ENCODE measurements at regions of chr3 and their contacts with region 1.

Region 1: DNA sequence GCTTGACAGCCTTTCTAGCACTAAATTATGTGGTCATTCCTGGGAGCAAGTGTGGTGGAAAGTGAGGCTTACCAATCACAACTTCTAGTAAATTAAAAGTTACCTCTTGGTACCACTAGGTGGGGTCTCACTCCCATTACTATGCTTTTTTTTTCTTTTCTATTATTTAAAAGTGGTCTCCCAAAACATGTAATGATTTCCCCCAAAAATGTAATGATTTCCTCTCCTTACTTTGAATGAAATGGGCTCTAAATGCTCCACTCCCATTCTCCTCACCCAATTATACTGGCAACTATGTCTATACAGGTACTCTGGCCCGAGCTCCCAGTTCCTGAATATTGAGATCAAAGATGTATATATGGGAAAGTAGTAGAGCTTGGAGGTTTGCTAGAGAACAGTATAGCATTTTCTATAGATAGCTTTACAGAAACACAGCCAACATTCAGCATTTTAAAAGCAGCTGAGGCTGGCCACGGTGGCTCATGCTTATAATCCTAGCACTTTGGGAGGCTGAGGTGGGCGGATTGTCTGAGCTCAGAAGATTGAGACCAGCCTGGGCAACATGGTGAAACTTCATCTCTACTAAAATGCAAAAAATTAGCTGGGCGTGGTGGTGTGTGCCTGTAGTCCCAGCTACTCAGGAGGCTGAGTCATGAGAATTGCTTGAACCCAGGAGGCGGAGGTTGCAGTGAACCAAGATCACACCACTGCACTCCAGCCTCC is 70.9 kb downstream of the DCUN1D1 start:
- DNase-seq: no peak
- H3K4me3 ChIP-seq: no peak overlapping the region
- H3K27ac ChIP-seq: no peak overlapping the region
- H3K27me3 ChIP-seq: no peaks in the 10 kb centered on the region
- CTCF ChIP-seq: peak; percentile 62

Region 2: GRCh38 chr3:182920515-182921084 is 11.1 kb after region 1 on chr3:
- CTCF ChIA-PET with region 1: interaction called, 18 read pairs
- POLR2A ChIA-PET with region 1: no interaction called
- DNase-seq: no peak
- H3K4me3 ChIP-seq: no peak overlapping the region
- H3K27ac ChIP-seq: no peak overlapping the region
- H3K27me3 ChIP-seq: no peaks in the 10 kb centered on the region
- CTCF ChIP-seq: no peak

Measured in AG04450 (cell line).